ENCODE measurements at regions of chr17 and their contacts with region 1.

Region 1: DNA sequence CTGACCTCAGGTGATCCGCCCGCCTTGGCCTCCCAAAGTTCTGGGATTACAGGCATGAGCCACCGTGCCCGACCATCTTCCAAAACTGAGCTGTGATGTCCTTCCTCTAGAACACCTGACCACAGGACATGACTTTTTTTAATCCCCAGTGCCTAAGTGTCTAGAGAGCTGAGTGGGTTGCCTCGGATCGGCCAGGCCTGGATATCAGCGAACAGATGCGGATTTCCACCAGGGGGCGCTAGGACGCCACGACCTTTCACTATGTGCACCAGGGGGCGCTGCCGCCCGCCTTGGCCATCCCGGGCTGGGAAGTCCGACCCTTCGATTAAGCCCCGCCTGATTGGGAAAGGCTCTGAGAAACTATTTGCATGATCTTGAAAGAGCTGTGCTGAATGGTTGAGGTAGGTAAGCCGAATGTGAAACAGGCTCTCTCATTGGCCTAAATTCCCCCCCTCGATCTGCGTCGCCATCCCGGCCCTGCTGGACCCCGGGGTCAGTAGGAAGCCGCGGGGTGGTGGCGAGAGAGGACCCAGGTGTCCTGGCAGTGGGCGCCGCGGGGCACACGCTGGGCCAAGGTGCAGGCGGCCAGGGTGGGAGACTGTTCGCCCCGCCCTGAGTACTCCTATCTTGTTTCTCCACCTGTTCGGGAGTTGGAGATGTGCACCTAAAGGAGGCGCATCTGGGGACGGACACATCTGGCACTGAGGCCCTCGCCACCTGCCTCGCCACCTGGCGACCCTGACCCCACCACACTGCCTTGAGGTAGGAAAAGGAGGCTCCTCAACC is at the start of gene ACBD4:
- DNase-seq: peak; percentile 97
- ATAC-seq: peak; percentile 71
- H3K4me3 ChIP-seq: peak within 1 kb of the TSS; percentile 47
- H3K27ac ChIP-seq: peak within 1 kb of the TSS; percentile 4
- H3K4me1 ChIP-seq: peaks cover 15% of the 10 kb centered on the region
- H3K27me3 ChIP-seq: no peaks in the 10 kb centered on the region
- CTCF ChIP-seq: peak; percentile 100; the same call in 1 of the 2 replicates
- POLR2A ChIP-seq: 0 out of 2 replicates have a peak, but pooled peaks have one; percentile 47
- RAD21 ChIP-seq: peak; percentile 99
- total RNA-seq, gene ACBD4: 1.7 and 2.3 TPM in 2 replicates

Region 2: DNA sequence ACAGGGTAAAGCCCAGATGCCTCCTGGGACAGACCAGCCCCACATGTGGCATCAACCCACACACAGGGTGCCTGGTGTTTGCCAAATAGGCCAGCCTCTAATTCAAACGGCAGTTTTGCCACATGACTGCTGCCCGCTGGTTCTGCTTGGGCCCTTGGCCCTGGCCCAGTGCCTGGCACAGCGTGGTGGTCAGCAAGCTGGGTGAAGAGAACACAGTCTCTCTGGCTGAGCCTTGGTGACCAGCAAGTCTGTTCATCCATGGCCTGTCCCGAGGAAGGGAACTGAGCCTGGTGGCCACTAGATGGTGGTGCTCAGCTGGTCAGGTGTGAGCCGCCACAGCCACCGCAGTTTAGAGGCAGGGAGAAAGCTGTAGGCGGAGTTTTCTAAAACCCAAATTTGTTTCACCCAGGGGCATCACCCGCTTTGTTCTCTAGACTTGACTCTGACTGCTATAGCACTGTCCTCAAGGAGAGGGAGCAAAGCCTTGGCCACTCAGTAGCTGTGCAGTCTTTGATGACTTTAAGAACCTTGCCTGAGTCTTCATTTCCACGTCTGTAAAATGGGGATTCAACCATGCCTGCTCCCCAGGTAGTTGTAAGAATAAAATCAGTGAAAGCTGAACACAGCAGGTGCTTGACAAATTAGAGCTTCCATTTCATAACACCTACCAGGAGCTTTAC is 215.4 kb before region 1 on chr17:
- CTCF ChIA-PET with region 1: no interaction called
- POLR2A ChIA-PET with region 1: no interaction called
- dilution Hi-C with region 1: no loop called
- in situ Hi-C with region 1: no loop called
- intact Hi-C with region 1: loop called (anchors 1 kb)
- DNase-seq: peak; percentile 80
- ATAC-seq: peak; percentile 96
- H3K4me3 ChIP-seq: no peak overlapping the region
- H3K27ac ChIP-seq: no peak overlapping the region
- H3K4me1 ChIP-seq: peaks cover 9% of the 10 kb centered on the region; the same call in 1 of the 2 replicates
- H3K27me3 ChIP-seq: peaks cover 5% of the 10 kb centered on the region; the same call in 1 of the 2 replicates
- CTCF ChIP-seq: peak; percentile 94
- POLR2A ChIP-seq: 0 out of 2 replicates have a peak, but pooled peaks have one; percentile 43
- RAD21 ChIP-seq: peak; percentile 95

Region 3: GRCh38 chr17:45092932-45093430 is 42.4 kb before region 1 on chr17:
- CTCF ChIA-PET with region 1: interaction called, 8 read pairs
- POLR2A ChIA-PET with region 1: no interaction called
- dilution Hi-C with region 1: no loop called
- in situ Hi-C with region 1: no loop called
- intact Hi-C with region 1: loop called (anchors 1 kb)
- DNase-seq: peak; percentile 99
- ATAC-seq: peak; percentile 97
- H3K4me3 ChIP-seq: no peak overlapping the region
- H3K27ac ChIP-seq: peak overlapping the region; percentile 99
- H3K4me1 ChIP-seq: peaks cover 28% of the 10 kb centered on the region
- H3K27me3 ChIP-seq: no peaks in the 10 kb centered on the region
- CTCF ChIP-seq: no peak
- POLR2A ChIP-seq: peak; percentile 67; the same call in 1 of the 2 replicates
- RAD21 ChIP-seq: no peak

Region 4: GRCh38 chr17:45148183-45149036 is 13.0 kb after region 1 on chr17 and contains the start of gene HEXIM1:
- CTCF ChIA-PET with region 1: interaction called, 32 read pairs
- POLR2A ChIA-PET with region 1: interaction called, 33 read pairs
- dilution Hi-C with region 1: no loop called
- in situ Hi-C with region 1: no loop called
- intact Hi-C with region 1: no loop called
- DNase-seq: peak; percentile 99
- ATAC-seq: peak; percentile 74
- H3K4me3 ChIP-seq: peak within 1 kb of the TSS; percentile 56
- H3K27ac ChIP-seq: peak within 1 kb of the TSS; percentile 94
- H3K4me1 ChIP-seq: peaks cover 17% of the 10 kb centered on the region
- H3K27me3 ChIP-seq: no peaks in the 10 kb centered on the region
- CTCF ChIP-seq: no peak
- POLR2A ChIP-seq: peak; percentile 100
- RAD21 ChIP-seq: no peak
- total RNA-seq, gene HEXIM1: 5.9 and 8.6 TPM in 2 replicates

Region 5: DNA sequence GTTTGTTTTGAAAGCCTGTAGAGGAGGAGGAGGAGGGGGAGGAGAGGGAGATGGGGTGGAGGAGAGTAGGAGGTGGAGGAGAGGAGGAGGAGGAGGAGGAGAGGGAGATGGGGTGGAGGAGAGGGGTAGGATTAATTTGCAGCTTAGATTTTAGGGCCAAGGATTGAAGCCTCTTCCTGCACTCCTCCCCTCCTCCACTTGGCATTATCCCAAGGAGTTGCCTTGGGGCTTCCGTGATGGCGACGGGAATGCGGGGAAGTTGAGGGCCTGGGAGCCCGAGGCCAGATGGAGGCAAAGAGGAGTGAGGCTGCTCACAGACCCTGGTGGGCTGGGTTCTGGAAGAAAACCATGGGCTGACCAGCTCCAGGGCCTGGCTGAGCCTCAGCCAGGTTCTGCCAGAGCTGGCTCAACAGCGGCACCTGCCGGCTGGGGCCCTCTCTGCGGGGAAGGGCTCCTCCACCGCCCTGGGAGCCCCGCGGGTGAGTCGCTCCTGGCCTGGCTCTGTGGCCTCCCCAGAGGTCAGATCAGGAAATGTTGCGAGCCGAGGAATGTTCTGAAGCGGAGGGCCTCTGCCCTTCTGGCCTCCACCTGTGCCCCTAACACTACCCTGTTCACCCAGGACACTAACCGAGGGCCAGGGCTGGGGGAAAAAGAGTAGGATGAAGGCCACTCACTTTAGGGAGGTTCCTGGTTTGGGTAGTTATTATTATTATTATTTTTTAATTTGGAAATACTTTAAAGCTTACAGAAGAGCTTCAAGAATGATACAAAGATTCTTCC is 62.4 kb after region 1 on chr17:
- CTCF ChIA-PET with region 1: interaction called, 59 read pairs
- POLR2A ChIA-PET with region 1: no interaction called
- dilution Hi-C with region 1: no loop called
- in situ Hi-C with region 1: loop called (anchors 5 kb)
- intact Hi-C with region 1: loop called (anchors 1 kb)
- DNase-seq: peak; percentile 77
- ATAC-seq: peak; percentile 100
- H3K4me3 ChIP-seq: no peak overlapping the region
- H3K27ac ChIP-seq: peak overlapping the region; percentile 60
- H3K4me1 ChIP-seq: peaks cover 10% of the 10 kb centered on the region
- H3K27me3 ChIP-seq: no peaks in the 10 kb centered on the region
- CTCF ChIP-seq: peak; percentile 100; the same call in 1 of the 2 replicates
- POLR2A ChIP-seq: peak; percentile 54; the same call in 1 of the 2 replicates
- RAD21 ChIP-seq: peak; percentile 100

Region 6: DNA sequence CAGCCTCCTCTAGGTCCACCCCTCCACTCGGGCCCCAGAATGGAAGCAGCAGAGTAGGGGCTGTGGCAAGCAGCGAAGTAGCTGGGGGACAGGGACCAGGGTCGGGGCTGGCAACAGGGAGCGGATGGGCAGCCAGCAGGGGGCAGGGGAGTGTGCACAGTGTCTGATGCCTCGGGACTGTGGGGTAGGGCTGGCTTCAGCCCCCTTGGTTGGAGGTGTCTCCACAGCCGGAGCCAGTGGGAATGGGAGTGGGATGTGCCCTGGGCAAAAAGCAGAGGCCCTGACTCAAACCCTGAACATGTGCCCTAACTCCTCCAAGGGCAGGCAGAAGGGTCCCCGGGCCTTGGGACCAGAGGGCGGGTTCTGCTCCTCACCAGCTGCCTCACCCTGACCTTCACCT is 315.8 kb after region 1 on chr17:
- CTCF ChIA-PET with region 1: no interaction called
- POLR2A ChIA-PET with region 1: no interaction called
- dilution Hi-C with region 1: no loop called
- in situ Hi-C with region 1: no loop called
- intact Hi-C with region 1: no loop called
- DNase-seq: no peak
- ATAC-seq: no peak
- H3K4me3 ChIP-seq: no peak overlapping the region
- H3K27ac ChIP-seq: no peak overlapping the region
- H3K4me1 ChIP-seq: no peaks in the 10 kb centered on the region
- H3K27me3 ChIP-seq: no peaks in the 10 kb centered on the region
- CTCF ChIP-seq: no peak
- POLR2A ChIP-seq: no peak
- RAD21 ChIP-seq: no peak

Measured in IMR-90 (cell line).